ENCODE measurements at regions of chrX and their contacts with region 1.

Region 1: DNA sequence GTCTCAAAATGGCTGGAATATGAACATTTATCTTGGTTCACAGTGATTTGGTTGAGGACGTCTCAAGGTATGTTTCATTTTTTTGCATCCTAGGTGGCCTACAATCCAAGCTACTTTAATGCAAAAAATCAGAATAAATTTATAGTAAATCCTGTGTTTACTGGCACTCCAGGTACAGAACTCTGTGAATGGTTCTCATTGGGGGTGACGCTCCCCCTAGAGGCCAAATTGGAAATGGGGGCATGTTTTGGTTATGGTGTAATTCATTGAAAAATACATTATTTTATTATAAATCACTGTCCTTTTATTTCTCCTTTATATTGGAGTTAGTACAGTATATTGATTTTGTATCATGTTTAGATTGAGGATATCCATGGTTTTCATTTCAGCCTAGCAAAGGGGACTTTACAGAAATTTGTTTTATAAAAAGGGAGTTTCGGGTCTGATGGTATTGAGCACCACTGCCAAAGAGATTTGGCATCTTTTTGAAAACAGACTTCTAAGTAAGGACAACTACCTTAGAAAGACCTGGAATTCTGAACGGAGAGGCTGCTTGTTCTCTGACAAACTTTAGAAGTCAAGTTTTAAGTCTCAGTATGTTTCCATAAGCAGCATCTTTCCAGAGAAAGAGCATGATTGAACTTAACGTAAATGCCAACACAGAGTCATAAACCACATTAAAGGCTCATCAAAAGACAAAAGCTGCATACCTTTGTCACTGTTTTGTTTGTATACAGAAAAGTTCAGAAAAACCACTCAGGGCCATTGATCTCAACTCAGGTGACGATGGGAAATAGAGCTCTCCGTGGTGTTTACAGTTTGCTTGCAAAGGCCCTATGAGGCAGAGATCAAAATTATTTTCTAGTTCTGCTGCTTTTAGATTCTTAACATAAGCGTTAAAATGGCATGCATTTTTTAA is 19.4 kb downstream of the MTM1 start:
- DNase-seq: no peak
- ATAC-seq: no peak
- H3K4me3 Mint-ChIP-seq: no peak overlapping the region
- H3K27ac Mint-ChIP-seq: no peak overlapping the region
- H3K4me1 Mint-ChIP-seq: peaks cover 10% of the 10 kb centered on the region
- H3K27me3 Mint-ChIP-seq: no peaks in the 10 kb centered on the region
- CTCF ChIP-seq: no peak

Region 2: GRCh38 chrX:149962859-149963757 is 624.7 kb before region 1 on chrX:
- CTCF ChIA-PET with region 1: interaction called, 4 read pairs
- POLR2A ChIA-PET with region 1: no interaction called
- intact Hi-C with region 1: loop called (anchors 2 kb)
- DNase-seq: no peak
- ATAC-seq: peak; percentile 54
- H3K4me3 Mint-ChIP-seq: no peak overlapping the region
- H3K27ac Mint-ChIP-seq: no peak overlapping the region
- H3K4me1 Mint-ChIP-seq: no peaks in the 10 kb centered on the region
- H3K27me3 Mint-ChIP-seq: no peaks in the 10 kb centered on the region
- CTCF ChIP-seq: no peak

Region 3: DNA sequence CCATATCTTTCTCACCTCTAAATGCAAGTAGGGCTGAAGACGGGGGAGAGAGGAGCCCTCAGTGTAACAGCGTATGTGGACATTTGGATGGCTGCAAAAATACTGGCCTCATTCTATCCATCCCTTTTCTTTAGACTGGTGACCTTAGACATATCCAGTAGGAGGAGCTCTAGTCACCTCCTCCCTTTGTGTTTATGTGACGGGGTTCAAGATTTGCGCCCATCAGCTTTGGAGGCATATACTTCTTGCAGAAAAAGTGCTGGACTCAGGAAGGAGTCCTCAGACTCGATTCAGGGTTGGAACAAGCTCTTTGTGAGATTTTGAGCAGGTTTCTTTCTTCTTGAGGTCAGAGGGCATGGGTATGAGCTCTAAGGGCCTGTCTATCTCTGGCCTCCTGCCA is 138.5 kb before region 1 on chrX:
- CTCF ChIA-PET with region 1: interaction called, 3 read pairs
- POLR2A ChIA-PET with region 1: no interaction called
- intact Hi-C with region 1: loop called (anchors 1 kb)
- DNase-seq: no peak
- ATAC-seq: no peak
- H3K4me3 Mint-ChIP-seq: no peak overlapping the region
- H3K27ac Mint-ChIP-seq: no peak overlapping the region
- H3K4me1 Mint-ChIP-seq: no peaks in the 10 kb centered on the region
- H3K27me3 Mint-ChIP-seq: no peaks in the 10 kb centered on the region
- CTCF ChIP-seq: no peak

Region 4: DNA sequence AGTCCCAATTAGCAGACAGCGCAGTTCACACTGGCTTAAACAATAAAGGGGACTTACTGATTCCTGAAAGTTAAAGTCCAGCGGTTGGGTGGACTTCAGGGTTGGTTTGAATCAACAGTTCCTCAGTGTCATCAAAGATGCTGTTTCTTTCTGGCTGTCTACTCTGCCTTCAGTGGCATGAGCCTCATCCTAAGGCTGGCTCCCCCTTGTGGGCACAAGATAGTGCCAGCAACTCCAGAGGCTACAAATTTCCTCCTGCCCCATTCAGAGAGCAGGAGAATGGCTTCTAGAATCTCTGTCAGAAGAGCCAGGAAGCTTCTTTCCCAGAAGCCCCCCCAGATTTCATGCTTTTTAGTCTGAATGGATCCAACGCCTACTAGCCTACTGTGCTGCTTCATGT is 101.8 kb before region 1 on chrX:
- CTCF ChIA-PET with region 1: interaction called, 4 read pairs
- POLR2A ChIA-PET with region 1: no interaction called
- intact Hi-C with region 1: loop called (anchors 5 kb)
- DNase-seq: no peak
- ATAC-seq: peak; percentile 52
- H3K4me3 Mint-ChIP-seq: no peak overlapping the region
- H3K27ac Mint-ChIP-seq: no peak overlapping the region
- H3K4me1 Mint-ChIP-seq: peaks cover 3% of the 10 kb centered on the region
- H3K27me3 Mint-ChIP-seq: no peaks in the 10 kb centered on the region
- CTCF ChIP-seq: no peak

Region 5: GRCh38 chrX:150525061-150525919 is 62.6 kb before region 1 on chrX:
- CTCF ChIA-PET with region 1: interaction called, 3 read pairs
- POLR2A ChIA-PET with region 1: no interaction called
- intact Hi-C with region 1: loop called (anchors 10 kb)
- DNase-seq: no peak
- ATAC-seq: no peak
- H3K4me3 Mint-ChIP-seq: no peak overlapping the region
- H3K27ac Mint-ChIP-seq: no peak overlapping the region
- H3K4me1 Mint-ChIP-seq: no peaks in the 10 kb centered on the region
- H3K27me3 Mint-ChIP-seq: no peaks in the 10 kb centered on the region
- CTCF ChIP-seq: no peak

Region 6: DNA sequence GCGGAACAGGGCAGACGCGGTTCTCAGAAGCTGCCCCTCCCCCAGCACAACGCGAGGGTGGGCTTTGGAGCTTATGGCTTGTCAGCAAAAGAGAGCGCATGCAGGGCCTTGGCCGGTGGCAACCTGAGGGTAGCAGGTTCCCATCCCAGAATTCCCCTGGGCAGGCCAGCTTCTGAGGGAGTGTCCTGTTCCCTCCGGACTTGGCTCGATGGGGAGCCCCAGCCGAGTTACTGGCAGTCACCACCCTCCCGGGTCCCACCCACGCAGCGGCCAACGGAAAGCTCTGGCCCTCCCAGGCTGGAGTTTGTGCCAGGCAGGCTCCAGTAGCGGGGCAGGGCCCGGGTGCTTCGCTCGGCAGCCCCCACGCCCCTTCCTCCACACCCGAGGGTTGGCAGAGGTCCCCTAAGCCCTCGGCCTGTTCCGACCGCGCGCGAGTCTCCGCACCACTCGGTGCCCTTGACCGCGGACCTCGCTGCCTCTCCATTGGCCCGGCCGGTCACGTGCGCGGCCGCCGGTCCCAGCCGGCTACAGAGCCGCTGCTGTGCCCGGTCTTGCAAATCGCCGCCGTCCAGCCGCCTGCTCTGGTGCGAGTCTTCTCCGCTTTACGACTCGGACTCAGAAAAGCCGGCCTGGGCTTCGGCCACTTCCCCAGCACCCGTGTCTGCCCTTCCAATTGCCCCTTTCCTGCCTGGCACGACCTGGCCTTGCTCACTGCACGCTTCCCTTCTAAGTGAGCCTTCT is 40.3 kb before region 1 on chrX:
- CTCF ChIA-PET with region 1: no interaction called
- POLR2A ChIA-PET with region 1: no interaction called
- intact Hi-C with region 1: loop called (anchors 5 kb)
- DNase-seq: peak; percentile 32
- ATAC-seq: peak; percentile 57
- H3K4me3 Mint-ChIP-seq: peak overlapping the region; percentile 77
- H3K27ac Mint-ChIP-seq: peak overlapping the region; percentile 66
- H3K4me1 Mint-ChIP-seq: peaks cover 33% of the 10 kb centered on the region
- H3K27me3 Mint-ChIP-seq: no peaks in the 10 kb centered on the region
- CTCF ChIP-seq: no peak

Region 7: DNA sequence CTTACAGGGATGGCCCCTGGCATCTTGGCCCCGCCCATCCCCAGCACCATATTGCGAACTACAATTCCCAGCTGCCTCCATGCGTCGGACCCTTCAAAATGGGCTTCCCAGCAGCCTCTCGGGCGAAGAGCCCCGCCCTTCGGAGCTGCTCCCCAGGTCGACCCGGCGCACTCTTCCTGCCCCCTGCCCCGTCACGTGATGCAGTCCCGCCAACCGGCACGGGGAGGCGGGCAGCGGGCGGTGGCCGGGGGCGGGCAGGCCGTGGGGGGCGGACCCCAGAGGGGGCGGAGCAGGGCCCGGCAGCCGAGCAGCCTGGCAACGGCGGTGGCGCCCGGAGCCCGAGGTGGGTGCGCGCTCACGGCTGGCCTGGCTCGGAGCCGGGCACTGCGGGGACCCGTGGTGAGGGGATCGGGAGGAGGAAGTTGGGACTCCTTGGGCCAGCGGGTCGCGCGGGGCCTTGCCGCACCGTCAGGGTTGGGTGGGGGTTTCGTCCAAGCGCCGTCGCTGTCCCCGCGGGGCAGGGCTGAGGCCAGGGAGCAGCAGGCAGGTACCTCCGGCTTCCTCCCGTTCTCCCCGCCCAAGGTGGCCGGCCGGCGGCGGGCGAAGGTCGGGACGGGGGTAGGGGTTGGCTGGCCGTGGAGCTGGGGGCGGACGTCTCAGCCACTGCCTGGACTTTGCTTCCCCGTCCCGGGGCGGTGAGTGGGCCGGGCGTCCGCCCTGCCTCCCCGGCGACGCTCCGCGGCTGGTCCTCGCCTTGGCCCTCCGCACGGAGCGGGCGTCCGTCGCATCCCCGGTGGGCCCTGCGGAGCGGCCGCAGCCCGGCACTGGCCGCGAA is 19.3 kb before region 1 on chrX and contains the start of gene MTM1:
- CTCF ChIA-PET with region 1: interaction called, 6 read pairs
- POLR2A ChIA-PET with region 1: interaction called, 6 read pairs
- intact Hi-C with region 1: loop called (anchors 2 kb)
- DNase-seq: peak; percentile 86
- ATAC-seq: peak; percentile 86
- H3K4me3 Mint-ChIP-seq: peak within 1 kb of the TSS; percentile 86
- H3K27ac Mint-ChIP-seq: peak within 1 kb of the TSS; percentile 89
- H3K4me1 Mint-ChIP-seq: peaks cover 45% of the 10 kb centered on the region
- H3K27me3 Mint-ChIP-seq: no peaks in the 10 kb centered on the region
- CTCF ChIP-seq: no peak
- total RNA-seq, gene MTM1: 22.0 and 24.4 TPM in 2 replicates

Region 8: DNA sequence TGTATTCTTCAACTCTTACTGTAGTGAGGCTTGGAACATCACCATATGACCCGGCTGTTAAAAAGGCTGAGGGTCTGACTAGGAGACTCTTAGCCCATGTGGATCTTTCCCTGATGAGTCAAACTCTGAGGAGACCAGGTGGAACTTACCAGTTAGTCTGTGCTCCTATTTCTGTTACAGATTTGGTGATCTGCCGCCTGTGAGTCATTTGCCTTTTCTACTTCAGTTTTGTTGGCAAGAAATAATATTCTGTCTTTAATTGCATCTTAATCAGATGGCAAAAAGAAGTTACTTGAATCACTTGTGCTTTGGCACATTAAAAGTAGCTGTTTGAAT is 29.0 kb after region 1 on chrX:
- CTCF ChIA-PET with region 1: no interaction called
- POLR2A ChIA-PET with region 1: no interaction called
- intact Hi-C with region 1: no loop called
- DNase-seq: no peak
- ATAC-seq: no peak
- H3K4me3 Mint-ChIP-seq: no peak overlapping the region
- H3K27ac Mint-ChIP-seq: no peak overlapping the region
- H3K4me1 Mint-ChIP-seq: peaks cover 9% of the 10 kb centered on the region
- H3K27me3 Mint-ChIP-seq: no peaks in the 10 kb centered on the region
- CTCF ChIP-seq: no peak

Region 9: GRCh38 chrX:150664290-150664689 is 76.4 kb after region 1 on chrX:
- CTCF ChIA-PET with region 1: no interaction called
- POLR2A ChIA-PET with region 1: no interaction called
- intact Hi-C with region 1: no loop called
- DNase-seq: no peak
- ATAC-seq: no peak
- H3K4me3 Mint-ChIP-seq: no peak overlapping the region
- H3K27ac Mint-ChIP-seq: no peak overlapping the region
- H3K4me1 Mint-ChIP-seq: no peaks in the 10 kb centered on the region
- H3K27me3 Mint-ChIP-seq: no peaks in the 10 kb centered on the region
- CTCF ChIP-seq: no peak

Measured in activated B cell treated with CpG ODN at 0.5 μM for 24 hours (primary cell).